Activated CD4-positive, alpha-beta T cell treated with anti-CD3 and anti-CD28 coated beads, Interleukin-2, amount 10 ng/mL, durations not matched to agents 24 days and 14 days (primary cell): ENCODE measurements at regions of chr7 and their contacts with region 1.

Region 1: DNA sequence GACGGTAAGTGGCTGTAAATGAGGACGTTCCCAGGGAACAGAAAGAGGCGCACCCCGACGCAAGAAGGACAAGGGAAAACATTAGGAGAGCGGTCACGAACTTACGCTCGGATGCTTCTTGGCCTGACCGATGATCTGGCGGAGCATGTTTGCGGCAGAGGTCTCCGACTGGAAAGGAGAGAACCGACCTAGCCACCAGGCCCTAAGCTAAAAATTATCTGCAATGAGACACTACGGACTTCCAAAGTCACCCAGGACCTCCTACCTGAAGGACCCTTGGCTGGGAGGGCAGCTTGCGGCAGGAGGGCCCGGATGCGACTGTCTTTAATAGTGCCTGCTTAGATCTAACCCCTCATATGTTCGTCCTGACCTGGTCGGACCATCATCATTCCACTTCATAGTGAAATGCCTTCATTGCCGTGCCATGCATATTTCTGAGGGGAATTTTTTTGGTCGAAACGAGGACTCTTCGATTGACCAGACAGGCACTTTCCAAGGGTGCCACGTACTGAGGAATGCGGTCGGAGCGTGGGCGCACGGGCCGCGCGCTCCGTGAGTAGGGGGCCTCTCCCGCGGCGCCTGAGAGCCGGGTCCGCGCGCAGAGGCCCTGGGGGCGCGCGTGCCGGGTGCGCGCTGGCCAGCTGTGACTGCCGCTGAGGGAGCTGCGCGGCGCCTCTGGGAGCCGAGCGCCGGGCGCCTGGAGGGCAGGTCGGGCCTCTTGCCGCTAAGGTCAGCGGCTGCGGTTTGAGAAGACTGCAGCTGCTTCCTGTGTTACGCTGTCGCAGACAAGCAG is 33.6 kb upstream of the PHF14 start:
- DNase-seq: peak; percentile 96
- H3K4me3 Mint-ChIP-seq: no peak overlapping the region
- H3K27ac Mint-ChIP-seq: no peak overlapping the region
- H3K4me1 Mint-ChIP-seq: peaks cover 12% of the 10 kb centered on the region
- H3K27me3 Mint-ChIP-seq: no peaks in the 10 kb centered on the region

Region 2: GRCh38 chr7:10973061-10973944 is 33.2 kb after region 1 on chr7 and contains the start of gene PHF14:
- intact Hi-C with region 1: loop called (anchors 1 kb)
- DNase-seq: peak; percentile 98
- H3K4me3 Mint-ChIP-seq: peak within 1 kb of the TSS; percentile 94
- H3K27ac Mint-ChIP-seq: peak within 1 kb of the TSS; percentile 93
- H3K4me1 Mint-ChIP-seq: peaks cover 32% of the 10 kb centered on the region
- H3K27me3 Mint-ChIP-seq: peaks cover 17% of the 10 kb centered on the region
- total RNA-seq, gene PHF14: 36.7 and 42.7 TPM in 2 replicates